SK-N-SH (cell line): ENCODE measurements at regions of chr3 and their contacts with region 1.

Region 1: DNA sequence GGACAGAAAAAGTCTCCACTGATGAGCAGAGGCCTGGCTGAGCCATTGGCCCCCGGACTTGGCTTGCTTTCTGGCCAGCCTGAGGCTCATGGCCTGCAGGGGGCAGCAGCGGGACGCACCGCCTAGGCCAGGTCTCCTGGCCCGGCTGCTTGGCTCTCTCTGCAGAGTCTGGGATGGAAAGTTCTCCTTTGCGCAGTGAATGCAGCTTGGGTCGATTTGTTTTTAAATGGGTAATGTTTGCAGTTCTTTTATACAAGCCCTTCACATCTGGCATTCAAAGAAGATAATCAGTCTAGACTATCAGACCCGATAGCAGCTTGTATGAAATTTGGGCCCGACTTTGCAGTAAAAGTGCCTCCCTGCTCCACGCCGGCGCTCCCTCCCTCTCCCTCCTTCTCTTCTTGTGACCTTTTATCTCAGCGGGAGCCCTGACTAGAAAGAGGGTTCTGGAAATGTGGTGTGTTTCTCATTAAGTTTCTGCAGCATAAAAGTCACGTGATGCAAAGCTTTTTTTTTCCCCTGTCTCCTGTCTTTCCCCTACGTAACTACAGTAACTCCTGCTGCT is 59.9 kb downstream of the ZNF621 start:
- DNase-seq: peak; percentile 80
- H3K4me3 ChIP-seq: peak overlapping the region; percentile 23 to 27; a peak in 3 of 4 replicates
- H3K27ac ChIP-seq: peak overlapping the region in 1 of 2 experiments; percentile 94; a peak in 2 of 4 replicates
- H3K4me1 ChIP-seq: peaks cover 0 to 22% of the 10 kb centered on the region in 2 experiments; a peak in 2 of 4 replicates
- H3K27me3 ChIP-seq: no peaks in the 10 kb centered on the region; the same call in 1 of the 2 replicates
- CTCF ChIP-seq: peak; percentile 95
- EP300 ChIP-seq: peak in 1 of 2 experiments; percentile 93; a peak in 2 of 4 replicates
- RAD21 ChIP-seq: peak; percentile 94

Region 2: DNA sequence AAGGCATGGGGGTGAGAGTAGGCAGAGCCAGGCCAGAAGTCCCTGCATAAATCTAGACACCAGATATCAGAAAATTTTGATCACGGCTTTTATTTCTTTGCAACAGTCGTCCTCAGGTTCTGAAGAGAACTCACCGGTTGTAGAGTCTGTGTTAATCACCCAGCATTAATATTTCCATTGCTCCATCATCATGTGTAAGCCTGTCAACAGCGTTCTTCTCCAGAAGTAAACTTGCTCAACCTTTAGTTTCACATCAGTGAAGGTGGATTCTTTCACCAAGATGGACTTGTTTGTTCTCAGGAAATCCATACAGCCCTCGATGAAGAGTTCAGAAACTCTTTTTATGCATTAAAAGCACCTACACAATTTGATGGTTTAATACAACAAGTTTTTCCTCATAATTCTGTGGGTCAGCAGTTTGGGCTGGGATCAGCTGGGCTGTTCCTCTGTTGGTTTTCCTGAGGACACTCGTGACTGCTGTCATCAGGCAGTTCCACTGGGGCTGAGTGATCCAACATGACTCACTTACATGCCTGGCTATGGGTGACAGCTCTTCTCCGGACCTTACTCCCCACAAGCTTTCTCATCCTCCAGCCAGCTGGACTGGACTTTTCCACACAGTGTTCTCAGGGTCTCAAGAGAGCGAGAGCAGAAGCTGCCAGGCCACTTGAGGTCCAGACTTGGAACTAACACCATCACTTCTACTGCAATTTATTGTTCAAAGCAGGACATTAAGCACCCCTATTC is 243.4 kb after region 1 on chr3:
- CTCF ChIA-PET with region 1: no interaction called
- POLR2A ChIA-PET with region 1: no interaction called
- DNase-seq: no peak
- H3K4me3 ChIP-seq: no peak overlapping the region
- H3K27ac ChIP-seq: no peak overlapping the region
- H3K4me1 ChIP-seq: no peaks in the 10 kb centered on the region
- H3K27me3 ChIP-seq: no peaks in the 10 kb centered on the region
- CTCF ChIP-seq: no peak
- EP300 ChIP-seq: no peak
- RAD21 ChIP-seq: no peak

Region 3: DNA sequence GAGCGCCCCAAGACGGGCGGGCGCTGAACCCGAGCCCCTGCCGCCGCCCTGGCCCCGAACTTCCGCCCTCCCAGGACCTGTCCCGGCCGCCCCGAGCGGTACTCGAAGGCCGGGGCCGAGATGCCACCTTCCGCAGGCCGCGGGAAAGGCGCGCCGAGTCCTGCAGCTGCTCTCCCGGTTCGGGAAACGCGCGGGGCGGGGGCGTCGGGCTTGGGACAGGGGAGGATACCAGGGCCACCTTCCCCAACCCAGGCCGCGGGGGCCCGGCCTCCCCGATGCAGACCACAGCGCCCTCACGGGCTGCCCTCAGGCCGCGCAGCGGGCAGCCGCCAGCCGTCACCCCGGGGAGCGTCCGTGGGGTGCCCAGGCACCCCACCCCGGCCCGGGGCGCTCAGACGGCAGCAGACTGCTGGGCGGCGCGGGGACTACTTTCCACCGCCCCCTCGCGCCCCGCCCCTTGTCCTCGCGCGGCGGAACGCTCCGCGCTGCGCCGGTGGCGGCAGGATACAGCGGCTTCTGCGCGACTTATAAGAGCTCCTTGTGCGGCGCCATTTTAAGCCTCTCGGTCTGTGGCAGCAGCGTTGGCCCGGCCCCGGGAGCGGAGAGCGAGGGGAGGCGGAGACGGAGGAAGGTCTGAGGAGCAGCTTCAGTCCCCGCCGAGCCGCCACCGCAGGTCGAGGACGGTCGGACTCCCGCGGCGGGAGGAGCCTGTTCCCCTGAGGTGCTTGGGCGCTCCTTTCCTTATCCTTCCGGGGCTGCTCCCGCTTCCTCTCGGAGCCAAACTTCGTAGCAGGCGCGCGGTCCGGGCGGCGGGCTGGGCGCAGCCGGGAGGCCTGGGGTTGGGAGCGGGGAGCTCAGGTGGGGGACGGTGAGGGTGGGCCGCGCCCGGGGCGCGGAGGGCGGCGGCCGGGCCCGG is 614.5 kb after region 1 on chr3 and contains the start of gene CTNNB1:
- CTCF ChIA-PET with region 1: interaction called, 61 read pairs
- POLR2A ChIA-PET with region 1: interaction called, 34 read pairs
- DNase-seq: peak; percentile 90
- H3K4me3 ChIP-seq: peak within 1 kb of the TSS; percentile 85 to 97
- H3K27ac ChIP-seq: peak within 1 kb of the TSS; percentile 90 to 97
- H3K4me1 ChIP-seq: peaks cover 11 to 13% of the 10 kb centered on the region in 2 experiments; a peak in 3 of 4 replicates
- H3K27me3 ChIP-seq: peaks cover 4% of the 10 kb centered on the region; the same call in 1 of the 2 replicates
- CTCF ChIP-seq: 0 out of 2 replicates have a peak, but pooled peaks have one; percentile 9
- EP300 ChIP-seq: peak in 1 of 2 experiments; percentile 59; a peak in 1 of 4 replicates
- RAD21 ChIP-seq: no peak; the same call in 1 of the 2 replicates
- polyA plus RNA-seq, gene CTNNB1: 178 and 279 TPM in 2 replicates

Region 4: DNA sequence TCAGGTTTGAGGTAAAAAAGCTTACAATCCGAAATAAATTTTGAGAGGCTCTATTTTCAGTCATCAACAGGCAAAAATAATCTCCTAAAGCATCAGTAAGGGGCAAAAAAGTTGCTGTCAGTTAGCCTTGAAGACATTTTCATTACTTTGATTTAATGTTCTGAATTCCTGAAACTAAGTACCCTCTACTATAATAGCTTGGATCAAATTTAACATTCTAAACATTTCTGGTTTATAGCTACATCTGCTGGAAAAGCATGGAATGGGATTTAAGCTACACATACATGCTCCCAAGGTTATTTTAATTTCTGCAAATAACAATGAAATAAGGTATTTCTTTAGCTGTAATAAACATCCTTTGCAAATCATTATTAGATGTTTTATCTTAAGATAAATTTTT is 1131.8 kb after region 1 on chr3:
- CTCF ChIA-PET with region 1: interaction called, 17 read pairs
- POLR2A ChIA-PET with region 1: no interaction called
- DNase-seq: peak; percentile 30
- H3K4me3 ChIP-seq: no peak overlapping the region
- H3K27ac ChIP-seq: no peak overlapping the region
- H3K4me1 ChIP-seq: peaks cover 0 to 6% of the 10 kb centered on the region in 2 experiments; a peak in 2 of 4 replicates
- H3K27me3 ChIP-seq: no peaks in the 10 kb centered on the region
- CTCF ChIP-seq: peak; percentile 56
- EP300 ChIP-seq: no peak
- RAD21 ChIP-seq: peak; percentile 70

Region 5: DNA sequence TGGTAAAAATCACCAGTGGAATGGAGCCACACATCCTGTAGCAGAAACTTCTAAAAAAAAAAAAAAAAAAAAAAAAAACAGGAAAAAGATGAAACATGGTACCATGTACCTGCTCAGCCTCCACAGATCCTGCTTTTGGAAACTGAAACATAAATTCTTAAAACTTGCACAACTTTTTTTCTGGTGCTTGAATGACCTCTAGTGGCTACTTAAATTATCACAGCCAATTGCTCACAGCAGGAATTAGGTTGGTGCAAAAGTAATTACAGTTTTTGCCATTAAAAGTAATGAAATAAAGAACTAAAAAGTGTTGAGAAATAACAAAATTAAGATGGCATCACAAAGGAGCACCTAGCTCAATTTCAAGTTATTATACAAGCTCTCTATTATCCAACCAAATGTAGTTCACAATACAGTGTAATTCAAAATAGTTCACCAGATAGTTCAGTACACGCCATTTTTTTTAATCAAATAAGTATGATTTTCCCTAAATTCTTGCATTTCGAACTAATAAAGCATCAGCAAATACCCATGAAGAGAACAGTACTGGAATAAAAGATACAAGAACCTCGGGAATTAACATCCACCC is 1296.6 kb after region 1 on chr3:
- CTCF ChIA-PET with region 1: interaction called, 136 read pairs
- POLR2A ChIA-PET with region 1: no interaction called
- DNase-seq: peak; percentile 29
- H3K4me3 ChIP-seq: no peak overlapping the region; a peak in 1 of 4 replicates
- H3K27ac ChIP-seq: no peak overlapping the region
- H3K4me1 ChIP-seq: no peaks in the 10 kb centered on the region
- H3K27me3 ChIP-seq: no peaks in the 10 kb centered on the region
- CTCF ChIP-seq: peak; percentile 69
- EP300 ChIP-seq: no peak
- RAD21 ChIP-seq: peak; percentile 86